Activated CD4-positive, alpha-beta memory T cell treated with anti-CD3 and anti-CD28 coated beads, Interleukin-2, amount 10 ng/mL, durations not matched to agents 7 days and 5 days (primary cell): ENCODE measurements at regions of chr10 and their contacts with region 1.

Region 1: GRCh38 chr10:30687698-30688219 is 58.2 kb upstream of the LYZL2 start:
- DNase-seq: peak; percentile 85
- H3K4me3 Mint-ChIP-seq: no peak overlapping the region
- H3K27ac Mint-ChIP-seq: peak overlapping the region; percentile 67
- H3K4me1 Mint-ChIP-seq: peaks cover 79% of the 10 kb centered on the region
- H3K27me3 Mint-ChIP-seq: no peaks in the 10 kb centered on the region

Region 2: DNA sequence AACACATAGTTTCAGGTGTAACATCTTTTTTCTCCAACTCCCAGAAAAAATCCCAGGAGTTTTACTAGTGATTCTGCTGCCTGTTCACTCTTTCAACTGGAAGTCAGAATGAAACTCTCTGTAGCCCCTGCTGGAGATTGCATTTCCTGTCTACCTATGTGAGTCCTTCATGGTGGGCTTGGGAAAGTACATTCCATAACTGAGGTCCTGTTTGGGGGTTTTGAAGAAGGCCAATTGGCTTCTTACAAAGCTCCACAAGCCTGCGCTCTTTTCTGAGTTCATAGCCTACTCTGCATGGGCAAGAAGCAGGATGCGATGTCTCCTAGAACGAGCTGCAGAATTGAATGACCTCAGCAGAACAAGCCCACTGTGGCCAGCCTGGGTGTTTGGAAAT is 144.9 kb before region 1 on chr10:
- CTCF ChIA-PET with region 1: no interaction called
- POLR2A ChIA-PET with region 1: no interaction called
- DNase-seq: no peak
- H3K4me3 Mint-ChIP-seq: no peak overlapping the region
- H3K27ac Mint-ChIP-seq: no peak overlapping the region
- H3K4me1 Mint-ChIP-seq: peaks cover 17% of the 10 kb centered on the region
- H3K27me3 Mint-ChIP-seq: no peaks in the 10 kb centered on the region

Region 3: GRCh38 chr10:30671026-30671616 is 16.6 kb before region 1 on chr10:
- CTCF ChIA-PET with region 1: interaction called, 23 read pairs
- POLR2A ChIA-PET with region 1: interaction called, 12 read pairs
- DNase-seq: peak; percentile 28
- H3K4me3 Mint-ChIP-seq: peak overlapping the region; percentile 46
- H3K27ac Mint-ChIP-seq: no peak overlapping the region
- H3K4me1 Mint-ChIP-seq: peaks cover 34% of the 10 kb centered on the region
- H3K27me3 Mint-ChIP-seq: peaks cover 7% of the 10 kb centered on the region

Region 4: GRCh38 chr10:30701451-30702173 is 13.9 kb after region 1 on chr10:
- CTCF ChIA-PET with region 1: interaction called, 84 read pairs
- POLR2A ChIA-PET with region 1: interaction called, 149 read pairs
- DNase-seq: peak; percentile 85
- H3K4me3 Mint-ChIP-seq: peak overlapping the region; percentile 82
- H3K27ac Mint-ChIP-seq: peak overlapping the region; percentile 99
- H3K4me1 Mint-ChIP-seq: peaks cover 89% of the 10 kb centered on the region
- H3K27me3 Mint-ChIP-seq: no peaks in the 10 kb centered on the region

Region 5: GRCh38 chr10:30722956-30723620 is 35.3 kb after region 1 on chr10:
- CTCF ChIA-PET with region 1: interaction called, 29 read pairs
- POLR2A ChIA-PET with region 1: interaction called, 6 read pairs
- DNase-seq: no peak
- H3K4me3 Mint-ChIP-seq: no peak overlapping the region
- H3K27ac Mint-ChIP-seq: no peak overlapping the region
- H3K4me1 Mint-ChIP-seq: peaks cover 34% of the 10 kb centered on the region
- H3K27me3 Mint-ChIP-seq: no peaks in the 10 kb centered on the region

Region 6: DNA sequence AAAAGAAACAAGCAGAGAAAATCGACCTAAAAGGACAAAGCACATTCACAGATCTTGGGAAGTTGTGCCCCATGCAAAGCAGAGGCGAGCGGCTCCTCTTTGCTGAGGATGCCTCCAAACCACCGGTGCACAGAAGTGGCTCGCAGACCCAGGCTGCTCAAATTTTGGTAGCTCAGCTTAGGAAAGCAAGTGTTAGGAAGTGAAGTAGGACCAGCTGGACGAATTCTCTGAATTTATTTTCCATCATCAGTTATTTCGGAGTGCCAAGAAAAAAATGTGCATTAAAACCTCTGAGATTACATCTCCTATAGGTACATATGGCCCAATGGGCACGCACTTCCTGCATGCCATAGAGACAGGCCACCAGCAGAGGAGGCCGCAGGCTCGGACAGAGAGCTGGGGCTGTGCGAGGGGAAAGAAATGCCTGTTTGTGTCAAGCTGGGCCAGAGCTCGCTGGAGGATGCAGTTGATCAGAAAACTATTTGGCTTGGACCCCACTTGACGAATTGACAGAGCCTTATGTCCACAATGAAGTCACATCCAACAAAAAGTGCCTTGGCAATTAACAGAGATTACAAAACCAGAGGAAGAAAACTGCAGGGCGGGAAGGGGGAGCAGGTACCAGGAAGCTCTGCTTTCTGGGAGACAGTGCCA is 64.0 kb after region 1 on chr10:
- CTCF ChIA-PET with region 1: interaction called, 12 read pairs
- POLR2A ChIA-PET with region 1: interaction called, 3 read pairs
- DNase-seq: peak; percentile 80
- H3K4me3 Mint-ChIP-seq: peak overlapping the region; percentile 9
- H3K27ac Mint-ChIP-seq: peak overlapping the region; percentile 80
- H3K4me1 Mint-ChIP-seq: peaks cover 52% of the 10 kb centered on the region
- H3K27me3 Mint-ChIP-seq: no peaks in the 10 kb centered on the region